Endothelial cell of umbilical vein (primary cell): ENCODE measurements at regions of chr5 and their contacts with region 1.

Region 1: DNA sequence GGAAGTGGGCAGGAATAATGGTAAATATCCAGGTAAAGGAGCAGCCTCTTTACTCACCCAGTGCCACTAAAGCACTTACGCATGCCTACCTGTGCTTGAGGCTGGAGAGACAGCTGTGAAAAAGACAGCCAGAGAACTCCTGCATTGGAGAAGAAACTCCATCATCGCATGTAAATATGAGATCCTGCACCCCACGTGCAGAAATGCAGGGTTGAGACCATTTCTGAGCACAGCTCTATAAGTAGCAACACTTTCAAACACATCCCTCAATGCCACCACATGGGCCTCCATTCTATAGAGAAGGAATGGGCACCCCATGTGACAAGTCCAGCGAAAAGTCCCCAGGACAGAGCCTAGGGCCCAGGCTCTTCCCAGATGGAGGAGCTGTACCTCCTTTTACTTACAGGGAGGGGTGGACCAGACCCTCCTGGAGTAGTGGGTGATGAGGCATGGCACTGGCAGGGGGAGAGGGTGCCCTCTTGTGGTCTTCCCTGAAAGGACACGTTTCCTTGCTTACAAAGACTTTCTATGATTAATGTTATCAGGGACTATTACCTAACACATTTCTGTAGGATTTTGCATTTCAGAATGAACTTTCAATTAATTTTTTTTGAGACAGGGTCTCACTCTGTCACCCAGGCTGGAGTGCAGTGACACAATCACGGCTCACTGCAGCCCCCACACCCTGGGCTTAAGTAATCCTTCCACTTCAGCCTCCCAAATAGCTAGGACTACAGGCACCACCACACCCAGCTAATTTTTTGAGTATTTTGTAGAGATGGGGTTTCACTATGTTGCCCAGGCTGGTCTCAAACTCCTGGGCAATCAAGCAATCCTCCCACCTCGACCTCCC is 55.3 kb upstream of the IL17B start:
- DNase-seq: peak; percentile 64
- H3K4me3 ChIP-seq: no peak overlapping the region
- H3K27ac ChIP-seq: no peak overlapping the region
- H3K4me1 ChIP-seq: peaks cover 14% of the 10 kb centered on the region
- H3K27me3 ChIP-seq: no peaks in the 10 kb centered on the region
- CTCF ChIP-seq: peak; percentile 82 to 85
- POLR2A ChIP-seq: no peak

Region 2: GRCh38 chr5:149133795-149134780 is 300.3 kb before region 1 on chr5:
- CTCF ChIA-PET with region 1: interaction called, 4 read pairs
- POLR2A ChIA-PET with region 1: no interaction called
- dilution Hi-C with region 1: no loop called
- intact Hi-C with region 1: loop called (anchors 10 kb)
- DNase-seq: peak; percentile 79
- H3K4me3 ChIP-seq: no peak overlapping the region
- H3K27ac ChIP-seq: peak overlapping the region; percentile 96
- H3K4me1 ChIP-seq: peaks cover 36% of the 10 kb centered on the region
- H3K27me3 ChIP-seq: no peaks in the 10 kb centered on the region
- CTCF ChIP-seq: no peak
- POLR2A ChIP-seq: no peak

Region 3: DNA sequence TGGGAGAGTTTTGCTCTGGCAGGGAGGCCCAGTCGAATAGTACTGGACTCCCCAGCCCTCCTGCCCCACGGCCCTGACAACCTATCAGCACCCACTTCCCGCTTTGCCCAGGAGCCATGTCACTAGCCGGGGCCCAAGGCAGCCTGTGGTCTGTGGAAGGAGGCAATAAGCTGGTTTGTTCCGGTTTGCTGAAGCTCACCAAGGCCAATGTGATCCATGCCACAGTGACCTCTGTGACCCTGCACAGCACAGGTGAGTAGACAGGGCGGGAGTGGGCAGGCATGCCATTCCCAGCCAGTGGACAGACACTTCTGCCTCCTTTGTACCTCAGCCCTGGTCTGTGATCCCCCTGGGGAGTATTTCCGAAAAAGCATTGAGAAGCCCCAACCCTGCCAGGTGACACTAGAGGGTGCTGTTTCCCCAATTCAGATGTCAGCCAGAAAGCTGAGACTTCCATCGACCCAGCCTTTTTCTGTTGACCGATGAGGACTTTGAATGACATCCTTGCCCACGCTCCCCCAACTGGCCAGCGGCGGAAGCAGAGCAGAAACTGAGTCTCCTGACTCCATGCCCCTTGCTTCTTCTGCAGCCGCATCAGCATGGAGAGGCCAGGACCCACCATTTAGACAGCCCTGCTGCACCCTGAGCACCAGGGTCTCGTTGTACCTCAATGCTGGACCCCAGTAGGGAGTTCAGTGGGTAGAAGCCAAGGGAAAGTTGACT is 67.0 kb before region 1 on chr5:
- CTCF ChIA-PET with region 1: interaction called, 40 read pairs
- POLR2A ChIA-PET with region 1: no interaction called
- dilution Hi-C with region 1: no loop called
- intact Hi-C with region 1: loop called (anchors 1 kb)
- DNase-seq: peak; percentile 64
- H3K4me3 ChIP-seq: no peak overlapping the region
- H3K27ac ChIP-seq: no peak overlapping the region
- H3K4me1 ChIP-seq: no peaks in the 10 kb centered on the region
- H3K27me3 ChIP-seq: no peaks in the 10 kb centered on the region
- CTCF ChIP-seq: peak; percentile 76 to 83
- POLR2A ChIP-seq: no peak

Region 4: GRCh38 chr5:149387081-149387631 is 47.2 kb before region 1 on chr5:
- CTCF ChIA-PET with region 1: interaction called, 79 read pairs
- POLR2A ChIA-PET with region 1: no interaction called
- dilution Hi-C with region 1: no loop called
- intact Hi-C with region 1: loop called (anchors 1 kb)
- DNase-seq: no peak
- H3K4me3 ChIP-seq: no peak overlapping the region
- H3K27ac ChIP-seq: no peak overlapping the region
- H3K4me1 ChIP-seq: no peaks in the 10 kb centered on the region
- H3K27me3 ChIP-seq: no peaks in the 10 kb centered on the region
- CTCF ChIP-seq: no peak
- POLR2A ChIP-seq: no peak

Region 5: DNA sequence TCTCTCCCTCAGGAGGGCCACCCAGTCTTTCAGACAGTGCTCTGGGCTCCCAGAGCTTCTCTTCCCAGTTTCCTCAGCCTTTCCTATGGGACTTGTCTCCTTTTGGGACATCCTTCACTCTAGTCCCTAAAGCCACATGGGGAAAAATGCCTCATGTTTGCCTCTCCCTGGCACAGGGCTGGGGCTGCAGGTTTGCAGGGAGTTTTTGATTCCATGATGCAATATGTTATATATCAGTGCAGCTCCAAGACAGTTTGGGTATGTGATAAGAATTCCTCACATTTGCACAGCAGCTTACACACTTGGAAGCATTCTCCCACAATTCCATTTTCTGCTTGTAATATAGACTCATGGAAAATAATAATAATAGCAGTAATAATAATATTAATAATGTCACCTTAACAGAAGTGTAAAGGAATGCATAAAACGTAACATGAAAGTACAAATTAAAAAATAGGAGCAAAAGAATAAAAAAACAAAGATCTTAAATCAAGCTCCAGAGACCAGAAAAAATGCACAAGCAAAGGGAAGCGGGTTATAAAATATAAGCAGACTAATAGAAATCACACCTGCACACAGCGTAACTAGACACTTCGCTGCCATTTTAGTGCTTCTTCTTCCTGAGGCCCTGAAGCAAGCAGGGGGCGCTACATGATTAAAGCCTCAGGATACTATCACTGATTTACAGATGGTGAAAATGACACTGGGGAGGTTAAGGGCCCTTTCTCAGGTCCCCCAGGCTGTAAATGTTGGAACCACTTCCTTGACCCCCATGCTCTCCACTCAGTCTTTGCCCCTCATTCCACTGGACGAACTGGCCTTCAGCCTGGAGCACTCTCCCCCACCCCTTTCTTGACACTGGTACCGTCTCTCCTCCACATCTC is 14.7 kb after region 1 on chr5:
- CTCF ChIA-PET with region 1: interaction called, 26 read pairs
- POLR2A ChIA-PET with region 1: no interaction called
- dilution Hi-C with region 1: no loop called
- intact Hi-C with region 1: no loop called
- DNase-seq: peak; percentile 56
- H3K4me3 ChIP-seq: no peak overlapping the region
- H3K27ac ChIP-seq: peak overlapping the region; percentile 90
- H3K4me1 ChIP-seq: peaks cover 63% of the 10 kb centered on the region
- H3K27me3 ChIP-seq: no peaks in the 10 kb centered on the region
- CTCF ChIP-seq: peak; percentile 22 to 23
- POLR2A ChIP-seq: no peak

Region 6: GRCh38 chr5:149618581-149619251 is 184.3 kb after region 1 on chr5:
- CTCF ChIA-PET with region 1: interaction called, 13 read pairs
- POLR2A ChIA-PET with region 1: no interaction called
- dilution Hi-C with region 1: no loop called
- intact Hi-C with region 1: loop called (anchors 2 kb)
- DNase-seq: peak; percentile 70
- H3K4me3 ChIP-seq: no peak overlapping the region
- H3K27ac ChIP-seq: no peak overlapping the region
- H3K4me1 ChIP-seq: peaks cover 6% of the 10 kb centered on the region
- H3K27me3 ChIP-seq: no peaks in the 10 kb centered on the region
- CTCF ChIP-seq: peak; percentile 67 to 75
- POLR2A ChIP-seq: no peak